ENCODE measurements at regions of chr12 and their contacts with region 1.

Region 1: DNA sequence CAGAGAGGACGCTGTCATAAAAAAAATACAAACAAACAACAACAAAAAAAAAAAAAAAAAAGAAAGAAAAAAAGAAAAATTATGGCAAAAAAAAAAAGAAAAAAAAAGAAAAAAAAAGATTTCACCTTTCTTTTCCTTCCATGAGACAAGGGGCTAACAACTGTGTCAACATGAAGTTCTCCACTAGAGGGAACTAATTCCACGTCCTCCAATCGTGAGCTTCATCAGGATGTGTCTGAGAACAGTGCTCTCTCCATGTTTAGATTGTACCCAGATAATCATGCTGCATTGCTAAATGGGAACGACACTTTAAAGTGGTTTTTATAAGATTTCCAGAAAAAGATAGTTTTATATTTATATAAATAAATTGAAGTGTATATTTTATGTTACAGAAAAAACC is 96.2 kb upstream of the PTPRB start:
- DNase-seq: peak; percentile 71 to 73
- ATAC-seq: peak; percentile 84 to 93; a peak in 4 of 6 replicates
- H3K4me3 ChIP-seq: no peak overlapping the region
- H3K27ac ChIP-seq: no peak overlapping the region
- H3K4me1 ChIP-seq: no peaks in the 10 kb centered on the region
- CTCF ChIP-seq: peak; percentile 80
- EP300 ChIP-seq: no peak
- POLR2A ChIP-seq: no peak
- RAD21 ChIP-seq: peak; percentile 77 to 86

Region 2: GRCh38 chr12:70590051-70590450 is 143.3 kb before region 1 on chr12:
- CTCF ChIA-PET with region 1: interaction called, 16 read pairs
- POLR2A ChIA-PET with region 1: no interaction called
- DNase-seq: peak; percentile 60 to 77
- ATAC-seq: peak; percentile 95 to 99
- H3K4me3 ChIP-seq: no peak overlapping the region
- H3K27ac ChIP-seq: no peak overlapping the region
- H3K4me1 ChIP-seq: no peaks in the 10 kb centered on the region
- CTCF ChIP-seq: peak; percentile 84
- EP300 ChIP-seq: no peak
- POLR2A ChIP-seq: no peak
- RAD21 ChIP-seq: peak; percentile 88 to 90

Region 3: GRCh38 chr12:70711831-70712230 is 21.6 kb before region 1 on chr12:
- CTCF ChIA-PET with region 1: no interaction called
- POLR2A ChIA-PET with region 1: no interaction called
- DNase-seq: no peak
- ATAC-seq: no peak
- H3K4me3 ChIP-seq: no peak overlapping the region
- H3K27ac ChIP-seq: no peak overlapping the region
- H3K4me1 ChIP-seq: no peaks in the 10 kb centered on the region
- CTCF ChIP-seq: no peak
- EP300 ChIP-seq: no peak
- POLR2A ChIP-seq: no peak
- RAD21 ChIP-seq: no peak

Region 4: GRCh38 chr12:70849265-70849960 is 116.0 kb after region 1 on chr12:
- CTCF ChIA-PET with region 1: interaction called, 26 read pairs
- POLR2A ChIA-PET with region 1: interaction called, 4 read pairs
- DNase-seq: peak; percentile 4 to 9
- ATAC-seq: no peak
- H3K4me3 ChIP-seq: no peak overlapping the region
- H3K27ac ChIP-seq: no peak overlapping the region
- H3K4me1 ChIP-seq: no peaks in the 10 kb centered on the region
- CTCF ChIP-seq: peak; percentile 34
- EP300 ChIP-seq: no peak
- POLR2A ChIP-seq: no peak
- RAD21 ChIP-seq: peak in 1 of 2 experiments; percentile 44; a peak in 2 of 5 replicates

Measured in A549 (cell line).